Right ventricle myocardium inferior (tissue), 1 donor: ENCODE measurements at regions of chrX and their contacts with region 1.

Region 1: DNA sequence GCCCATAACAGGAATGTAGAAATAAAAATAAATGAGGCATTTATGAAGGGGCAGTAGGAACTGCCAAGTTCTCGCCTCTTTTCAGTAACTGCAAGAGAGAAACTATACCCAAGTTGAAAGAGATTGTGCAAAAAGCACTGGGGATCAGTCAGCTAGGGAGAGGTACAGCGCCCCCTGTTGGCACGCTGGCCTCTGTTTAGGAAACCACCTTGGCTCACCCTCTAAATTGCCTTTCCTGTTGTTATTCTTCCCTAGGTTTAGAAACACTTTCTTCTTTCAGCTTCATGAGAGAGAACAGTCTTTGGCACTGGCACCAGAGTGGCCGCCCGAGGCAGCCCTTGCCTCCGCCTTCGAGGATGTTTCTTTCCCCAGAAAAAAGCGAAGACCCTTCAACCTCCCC is 348.5 kb downstream of the MID1IP1 start:
- DNase-seq: peak; percentile 90
- ATAC-seq: peak; percentile 76

Region 2: GRCh38 chrX:38768079-38768478 is 381.7 kb before region 1 on chrX:
- intact Hi-C with region 1: loop called (anchors 5 kb)
- DNase-seq: no peak
- ATAC-seq: no peak

Region 3: DNA sequence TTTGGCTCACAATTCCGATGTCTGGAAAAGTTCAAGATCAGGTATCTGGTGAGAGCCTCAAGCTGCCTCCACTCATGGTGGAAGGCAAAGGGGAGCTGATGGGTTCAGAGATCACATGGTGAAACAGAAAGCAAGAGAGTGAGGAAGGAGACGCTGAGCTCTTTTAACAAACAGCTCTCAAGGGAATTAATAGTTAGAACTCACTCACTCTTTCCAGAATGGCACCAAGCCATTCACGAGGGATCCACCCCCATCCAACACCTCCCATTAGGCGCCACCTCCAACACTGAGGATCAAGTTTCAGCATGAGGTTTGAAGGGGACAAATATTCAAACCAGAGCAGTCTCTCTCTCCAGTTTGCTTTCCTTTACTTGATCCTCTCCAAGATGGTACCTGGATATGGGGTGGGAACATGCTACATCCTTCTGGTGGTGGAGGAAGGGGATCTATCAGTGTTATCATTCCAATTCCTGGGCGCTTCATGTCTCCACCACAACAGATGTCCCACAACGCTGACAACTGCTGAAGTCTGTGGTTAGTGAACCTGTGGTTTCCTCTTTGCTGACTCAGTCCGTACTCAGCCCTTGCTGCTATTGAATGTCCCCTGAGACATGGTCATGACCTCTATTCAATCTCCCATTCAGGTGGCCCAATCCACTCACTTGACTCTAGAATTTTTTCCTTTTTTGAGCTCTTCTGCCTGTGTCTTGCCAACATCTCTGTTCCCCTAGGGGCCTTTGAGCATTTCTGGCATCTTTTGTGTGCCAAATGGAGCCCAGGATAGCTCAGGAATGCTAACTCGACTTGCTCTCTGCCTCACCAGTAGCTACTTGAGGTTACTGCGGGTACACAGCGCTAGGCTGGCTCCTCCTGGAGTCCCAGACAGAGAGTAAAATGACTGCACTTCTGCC is 46.7 kb after region 1 on chrX:
- intact Hi-C with region 1: no loop called
- DNase-seq: no peak
- ATAC-seq: no peak